Breast epithelium (tissue), 4 donors: ENCODE measurements at regions of chr18 and their contacts with region 1.

Region 1: DNA sequence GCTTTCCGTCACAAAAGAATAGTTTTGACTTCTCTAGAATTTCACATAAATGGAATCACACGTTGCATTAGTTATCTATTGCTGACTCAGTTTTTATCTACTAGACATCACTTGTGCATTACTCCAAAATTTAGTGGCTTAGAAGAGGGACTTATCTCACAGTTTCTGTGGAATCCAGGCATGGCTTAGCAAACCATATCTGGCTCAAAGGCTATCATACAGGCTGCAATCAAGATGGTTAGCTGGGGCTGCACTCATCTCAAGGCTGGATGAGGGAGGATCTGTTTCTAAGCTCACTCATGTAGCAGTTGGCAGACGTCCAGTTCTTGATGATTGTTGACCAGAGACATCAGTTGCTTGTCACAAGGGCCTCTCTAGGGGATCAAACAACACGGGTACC is 6.6 kb upstream of the DSC3 start:
- DNase-seq: no peak
- H3K4me3 ChIP-seq: no peak overlapping the region
- H3K27ac ChIP-seq: no peak overlapping the region
- H3K4me1 ChIP-seq: no peaks in the 10 kb centered on the region
- H3K27me3 ChIP-seq: no peaks in the 10 kb centered on the region
- CTCF ChIP-seq: no peak
- POLR2A ChIP-seq: no peak

Region 2: GRCh38 chr18:30034818-30035217 is 1014.4 kb before region 1 on chr18:
- intact Hi-C with region 1: no loop called
- DNase-seq: no peak
- H3K4me3 ChIP-seq: no peak overlapping the region
- H3K27ac ChIP-seq: no peak overlapping the region
- H3K4me1 ChIP-seq: no peaks in the 10 kb centered on the region
- H3K27me3 ChIP-seq: no peaks in the 10 kb centered on the region
- CTCF ChIP-seq: no peak
- POLR2A ChIP-seq: no peak

Region 3: GRCh38 chr18:30376515-30376914 is 672.7 kb before region 1 on chr18:
- intact Hi-C with region 1: loop called (anchors 5 kb)
- DNase-seq: no peak
- H3K4me3 ChIP-seq: no peak overlapping the region
- H3K27ac ChIP-seq: no peak overlapping the region
- H3K4me1 ChIP-seq: no peaks in the 10 kb centered on the region
- H3K27me3 ChIP-seq: no peaks in the 10 kb centered on the region
- CTCF ChIP-seq: no peak
- POLR2A ChIP-seq: no peak

Region 4: GRCh38 chr18:30987450-30988241 is 61.5 kb before region 1 on chr18:
- intact Hi-C with region 1: no loop called
- DNase-seq: peak in 1 of 2 donors; percentile 85
- H3K4me3 ChIP-seq: peak overlapping the region in 1 of 3 donors; percentile 5
- H3K27ac ChIP-seq: peak overlapping the region; percentile 19 to 37
- H3K4me1 ChIP-seq: no peaks in the 10 kb centered on the region
- H3K27me3 ChIP-seq: no peaks in the 10 kb centered on the region
- CTCF ChIP-seq: no peak
- POLR2A ChIP-seq: no peak

Region 5: DNA sequence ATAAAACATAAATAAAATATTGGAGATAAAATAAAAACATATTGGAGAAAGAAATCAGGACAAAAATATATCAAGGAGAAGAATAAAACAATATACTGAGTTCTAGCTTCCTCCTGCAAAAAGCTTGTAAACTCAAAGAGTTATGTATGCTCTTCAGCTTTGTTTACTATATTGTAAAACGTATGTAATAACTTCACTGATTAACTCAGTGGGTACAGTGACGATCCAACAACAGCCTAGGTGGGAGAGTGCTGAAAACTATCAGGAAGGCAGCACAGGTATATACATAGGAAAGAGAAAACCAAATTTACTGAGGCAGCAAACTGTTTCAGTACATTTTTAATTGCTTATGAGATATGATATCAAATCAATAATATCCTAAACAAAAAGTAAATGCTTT is 44.7 kb after region 1 on chr18:
- intact Hi-C with region 1: loop called (anchors 2 kb)
- DNase-seq: no peak
- H3K4me3 ChIP-seq: no peak overlapping the region
- H3K27ac ChIP-seq: no peak overlapping the region
- H3K4me1 ChIP-seq: no peaks in the 10 kb centered on the region
- H3K27me3 ChIP-seq: no peaks in the 10 kb centered on the region
- CTCF ChIP-seq: no peak
- POLR2A ChIP-seq: no peak

Region 6: DNA sequence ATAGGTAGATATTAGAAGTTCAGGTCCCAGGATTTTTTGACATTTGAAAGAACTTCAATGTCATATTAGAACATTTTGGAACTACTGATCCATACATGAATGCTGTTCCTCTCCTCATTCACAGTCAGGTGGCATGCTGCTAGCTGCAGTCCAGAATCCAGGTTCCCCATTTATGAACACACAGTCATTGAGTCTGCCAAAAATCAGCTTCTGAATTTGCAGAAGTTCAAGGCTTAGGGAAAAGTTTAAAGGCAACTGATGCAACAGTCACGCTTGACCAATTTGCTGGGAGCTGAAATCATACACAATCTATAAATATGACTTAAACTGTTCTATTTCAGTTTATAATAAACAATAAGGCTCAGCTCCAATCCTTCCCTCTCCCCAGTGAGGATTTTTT is 525.2 kb after region 1 on chr18:
- intact Hi-C with region 1: no loop called
- DNase-seq: no peak
- H3K4me3 ChIP-seq: no peak overlapping the region
- H3K27ac ChIP-seq: no peak overlapping the region
- H3K4me1 ChIP-seq: no peaks in the 10 kb centered on the region
- H3K27me3 ChIP-seq: no peaks in the 10 kb centered on the region
- CTCF ChIP-seq: no peak
- POLR2A ChIP-seq: no peak

Region 7: GRCh38 chr18:32629981-32630700 is 1581.0 kb after region 1 on chr18:
- intact Hi-C with region 1: no loop called
- DNase-seq: no peak
- H3K4me3 ChIP-seq: no peak overlapping the region
- H3K27ac ChIP-seq: no peak overlapping the region
- H3K4me1 ChIP-seq: no peaks in the 10 kb centered on the region
- H3K27me3 ChIP-seq: no peaks in the 10 kb centered on the region
- CTCF ChIP-seq: no peak
- POLR2A ChIP-seq: no peak